ENCODE measurements at regions of chr10 and their contacts with region 1.

Region 1: GRCh38 chr10:28393966-28394568 is 91.2 kb upstream of the MPP7 start:
- DNase-seq: peak; percentile 34
- H3K4me3 ChIP-seq: no peak overlapping the region
- H3K27ac ChIP-seq: no peak overlapping the region
- H3K27me3 ChIP-seq: peaks cover 2% of the 10 kb centered on the region
- CTCF ChIP-seq: peak; percentile 97

Region 2: GRCh38 chr10:28302638-28303488 is 91.2 kb before region 1 on chr10 and contains the start of gene MPP7:
- CTCF ChIA-PET with region 1: interaction called, 12 read pairs
- POLR2A ChIA-PET with region 1: no interaction called
- DNase-seq: peak; percentile 96
- H3K4me3 ChIP-seq: peak within 1 kb of the TSS; percentile 65
- H3K27ac ChIP-seq: no peak within 1 kb of the TSS
- H3K27me3 ChIP-seq: peaks cover 43% of the 10 kb centered on the region
- CTCF ChIP-seq: peak; percentile 19
- polyA plus RNA-seq, gene MPP7: 0.61 and 0.94 TPM in 2 replicates

Region 3: GRCh38 chr10:28326516-28327490 is 67.3 kb before region 1 on chr10:
- CTCF ChIA-PET with region 1: interaction called, 15 read pairs
- POLR2A ChIA-PET with region 1: no interaction called
- DNase-seq: no peak
- H3K4me3 ChIP-seq: no peak overlapping the region
- H3K27ac ChIP-seq: no peak overlapping the region
- H3K27me3 ChIP-seq: no peaks in the 10 kb centered on the region
- CTCF ChIP-seq: no peak